H1 (cell line): ENCODE measurements at regions of chr7 and their contacts with region 1.

Region 1: DNA sequence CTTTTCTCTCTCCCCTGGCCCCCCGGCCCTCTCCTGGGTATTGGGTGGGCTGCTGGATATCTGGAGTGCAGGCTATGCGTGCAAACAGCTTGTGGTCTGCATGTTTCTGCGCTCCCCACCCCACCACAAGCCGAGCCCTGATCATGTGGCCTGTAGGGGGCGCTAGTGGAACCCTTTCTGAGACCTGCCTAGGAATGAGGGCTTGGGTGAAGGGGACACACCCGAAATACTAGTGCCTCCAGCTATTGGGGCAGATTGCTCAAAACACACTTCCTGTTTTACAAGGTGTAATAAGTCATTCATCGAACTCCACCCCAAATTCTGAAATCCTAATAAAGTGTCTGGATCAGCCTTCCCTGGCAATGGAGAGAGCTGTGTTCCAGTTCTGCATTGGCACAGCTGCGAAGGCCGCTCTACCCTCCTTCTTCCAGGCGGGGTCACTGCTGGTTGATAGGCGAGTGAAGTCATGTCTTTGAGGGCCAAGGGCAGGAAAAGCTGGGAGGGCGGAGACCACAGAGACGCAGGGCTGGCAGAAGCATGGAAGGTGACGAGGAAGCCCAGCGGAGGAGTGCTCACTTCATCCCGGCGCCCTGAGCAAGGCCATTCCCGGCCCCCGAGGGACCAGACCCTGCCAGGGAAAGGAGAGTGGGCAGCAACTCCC is 19.8 kb upstream of the PRRT4 start:
- DNase-seq: peak in 1 of 2 experiments; percentile 96
- H3K4me3 ChIP-seq: no peak overlapping the region
- H3K27ac ChIP-seq: no peak overlapping the region
- H3K4me1 ChIP-seq: peaks cover 0 to 12% (median 8%) of the 10 kb centered on the region in 4 experiments; a peak in 5 of 7 replicates
- H3K27me3 ChIP-seq: peaks cover 0 to 3% (median 0%) of the 10 kb centered on the region in 4 experiments; a peak in 1 of 7 replicates
- CTCF ChIP-seq: peak; percentile 75 to 92 (median 90)
- EP300 ChIP-seq: no peak
- POLR2A ChIP-seq: no peak
- RAD21 ChIP-seq: peak; percentile 37 to 42; a peak in 3 of 4 replicates

Region 2: GRCh38 chr7:128361411-128362379 is 19.6 kb before region 1 on chr7 and contains the start of gene PRRT4:
- CTCF ChIA-PET with region 1: interaction called, 274 read pairs
- POLR2A ChIA-PET with region 1: no interaction called
- DNase-seq: peak in 1 of 2 experiments; percentile 73
- H3K4me3 ChIP-seq: peak within 1 kb of the TSS; percentile 44 to 77 (median 66)
- H3K27ac ChIP-seq: no peak within 1 kb of the TSS
- H3K4me1 ChIP-seq: peaks cover 0 to 14% (median 7%) of the 10 kb centered on the region in 4 experiments; a peak in 5 of 7 replicates
- H3K27me3 ChIP-seq: peaks cover 28 to 70% (median 57%) of the 10 kb centered on the region in 4 experiments
- CTCF ChIP-seq: peak; percentile 14 to 25 (median 19); a peak in 3 of 4 replicates
- EP300 ChIP-seq: no peak
- POLR2A ChIP-seq: no peak
- RAD21 ChIP-seq: peak in 1 of 2 experiments; percentile 24; a peak in 1 of 4 replicates
- total RNA-seq, gene PRRT4: 0.34 and 0.69 TPM in 2 replicates

Region 3: GRCh38 chr7:128409596-128410160 is 28.4 kb after region 1 on chr7 and contains the start of gene IMPDH1:
- CTCF ChIA-PET with region 1: interaction called, 275 read pairs
- POLR2A ChIA-PET with region 1: no interaction called
- DNase-seq: peak in 1 of 2 experiments; percentile 97
- H3K4me3 ChIP-seq: peak within 1 kb of the TSS; percentile 52 to 78 (median 64)
- H3K27ac ChIP-seq: no peak within 1 kb of the TSS
- H3K4me1 ChIP-seq: peaks cover 0 to 30% (median 23%) of the 10 kb centered on the region in 4 experiments; a peak in 6 of 7 replicates
- H3K27me3 ChIP-seq: peaks cover 33 to 73% (median 53%) of the 10 kb centered on the region in 4 experiments
- CTCF ChIP-seq: no peak
- EP300 ChIP-seq: no peak
- POLR2A ChIP-seq: peak in 1 of 2 experiments; percentile 51; a peak in 1 of 3 replicates
- RAD21 ChIP-seq: no peak
- total RNA-seq, gene IMPDH1: 44.0 and 45.8 TPM in 2 replicates

Region 4: DNA sequence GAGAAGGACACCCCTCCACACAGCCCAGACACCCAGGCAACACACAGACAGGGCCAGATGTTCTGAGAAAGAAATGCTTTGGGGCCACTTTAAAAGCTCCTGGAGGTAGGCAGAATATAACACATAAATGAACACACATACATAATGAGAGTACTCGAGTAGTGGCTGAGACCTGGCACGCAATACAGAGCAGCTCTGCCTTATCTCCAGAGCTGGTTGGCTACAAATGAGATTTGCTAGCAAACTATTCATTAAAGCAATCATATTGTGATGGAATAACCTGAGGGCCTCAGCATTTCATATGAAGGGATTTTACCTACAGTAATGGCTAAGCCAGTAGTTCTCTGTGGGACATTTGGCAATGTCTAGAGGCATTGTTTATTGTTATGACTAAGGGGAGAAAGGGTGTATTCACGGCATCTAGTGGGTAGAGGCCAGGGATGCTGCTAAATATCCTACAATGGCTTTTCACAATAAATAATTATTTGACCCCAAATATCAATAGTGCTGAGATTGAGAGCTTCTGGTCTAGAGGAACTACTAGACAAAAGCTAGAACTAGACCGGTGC is 34.0 kb after region 1 on chr7:
- CTCF ChIA-PET with region 1: interaction called, 24 read pairs
- POLR2A ChIA-PET with region 1: no interaction called
- DNase-seq: no peak
- H3K4me3 ChIP-seq: no peak overlapping the region
- H3K27ac ChIP-seq: no peak overlapping the region
- H3K4me1 ChIP-seq: 0 out of 7 replicates have a peak, but pooled peaks cover 0 to 3% (median 0%) of the 10 kb centered on the region in 4 experiments
- H3K27me3 ChIP-seq: peaks cover 2 to 23% (median 10%) of the 10 kb centered on the region in 4 experiments; a peak in 6 of 7 replicates
- CTCF ChIP-seq: no peak
- EP300 ChIP-seq: no peak
- POLR2A ChIP-seq: no peak
- RAD21 ChIP-seq: no peak